ENCODE measurements at regions of chr4 and their contacts with region 1.

Region 1: GRCh38 chr4:182925298-182925738 is 8.1 kb upstream of the DCTD start:
- DNase-seq: peak; percentile 77
- ATAC-seq: peak; percentile 98
- H3K4me3 Mint-ChIP-seq: no peak overlapping the region
- H3K27ac Mint-ChIP-seq: no peak overlapping the region
- H3K4me1 Mint-ChIP-seq: no peaks in the 10 kb centered on the region
- H3K27me3 Mint-ChIP-seq: peaks cover 2% of the 10 kb centered on the region

Region 2: GRCh38 chr4:181143250-181143854 is 1782.0 kb before region 1 on chr4:
- CTCF ChIA-PET with region 1: no interaction called
- POLR2A ChIA-PET with region 1: no interaction called
- intact Hi-C with region 1: loop called in 1 of 2 experiments (anchors 10 kb)
- DNase-seq: peak; percentile 84
- ATAC-seq: peak; percentile 60
- H3K4me3 Mint-ChIP-seq: no peak overlapping the region
- H3K27ac Mint-ChIP-seq: no peak overlapping the region
- H3K4me1 Mint-ChIP-seq: no peaks in the 10 kb centered on the region
- H3K27me3 Mint-ChIP-seq: peaks cover 5% of the 10 kb centered on the region

Region 3: DNA sequence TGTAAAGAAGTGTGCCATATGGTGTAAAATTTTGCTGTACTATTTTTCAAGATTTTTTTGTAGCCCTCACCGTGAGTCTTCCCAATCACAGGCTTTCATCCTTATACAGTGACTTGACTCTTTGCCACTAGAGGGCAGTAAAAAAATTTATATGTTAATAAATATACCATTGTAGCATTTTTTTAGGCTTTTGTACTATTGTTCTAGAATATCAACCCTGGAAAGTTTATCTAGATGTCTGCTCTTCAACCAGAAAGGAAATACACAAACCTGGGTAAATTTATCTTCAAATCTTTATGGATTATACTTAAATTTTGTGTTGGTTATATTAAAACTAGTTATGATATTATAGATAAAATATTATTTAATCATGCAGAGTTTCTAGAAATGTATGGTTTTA is 446.8 kb before region 1 on chr4:
- CTCF ChIA-PET with region 1: interaction called, 4 read pairs
- POLR2A ChIA-PET with region 1: no interaction called
- intact Hi-C with region 1: loop called (anchors 2 to 10 kb)
- DNase-seq: no peak
- ATAC-seq: no peak
- H3K4me3 Mint-ChIP-seq: no peak overlapping the region
- H3K27ac Mint-ChIP-seq: no peak overlapping the region
- H3K4me1 Mint-ChIP-seq: no peaks in the 10 kb centered on the region
- H3K27me3 Mint-ChIP-seq: no peaks in the 10 kb centered on the region

Region 4: DNA sequence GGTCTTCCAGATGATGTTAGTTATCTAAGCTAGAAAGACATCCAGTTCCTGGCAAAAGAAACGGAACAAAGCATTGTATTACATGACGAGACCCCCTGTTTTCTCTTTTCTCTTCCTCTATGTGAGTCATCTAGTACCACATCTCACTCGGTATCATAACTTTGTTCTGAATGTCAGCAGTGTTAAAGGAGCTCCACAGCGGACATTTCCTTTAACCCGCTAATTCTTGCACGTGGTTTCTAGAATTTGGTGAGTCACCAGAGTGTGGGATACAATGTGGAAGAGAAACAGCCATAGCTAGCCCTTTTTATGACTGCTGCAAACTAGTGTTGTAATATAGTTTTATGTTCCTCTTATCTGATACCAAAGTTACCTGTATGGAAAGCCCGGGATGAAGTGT is 438.4 kb before region 1 on chr4:
- CTCF ChIA-PET with region 1: no interaction called
- POLR2A ChIA-PET with region 1: no interaction called
- intact Hi-C with region 1: loop called in 1 of 2 experiments (anchors 10 kb)
- DNase-seq: peak; percentile 6
- ATAC-seq: no peak
- H3K4me3 Mint-ChIP-seq: no peak overlapping the region
- H3K27ac Mint-ChIP-seq: no peak overlapping the region
- H3K4me1 Mint-ChIP-seq: no peaks in the 10 kb centered on the region
- H3K27me3 Mint-ChIP-seq: peaks cover 19% of the 10 kb centered on the region

Region 5: DNA sequence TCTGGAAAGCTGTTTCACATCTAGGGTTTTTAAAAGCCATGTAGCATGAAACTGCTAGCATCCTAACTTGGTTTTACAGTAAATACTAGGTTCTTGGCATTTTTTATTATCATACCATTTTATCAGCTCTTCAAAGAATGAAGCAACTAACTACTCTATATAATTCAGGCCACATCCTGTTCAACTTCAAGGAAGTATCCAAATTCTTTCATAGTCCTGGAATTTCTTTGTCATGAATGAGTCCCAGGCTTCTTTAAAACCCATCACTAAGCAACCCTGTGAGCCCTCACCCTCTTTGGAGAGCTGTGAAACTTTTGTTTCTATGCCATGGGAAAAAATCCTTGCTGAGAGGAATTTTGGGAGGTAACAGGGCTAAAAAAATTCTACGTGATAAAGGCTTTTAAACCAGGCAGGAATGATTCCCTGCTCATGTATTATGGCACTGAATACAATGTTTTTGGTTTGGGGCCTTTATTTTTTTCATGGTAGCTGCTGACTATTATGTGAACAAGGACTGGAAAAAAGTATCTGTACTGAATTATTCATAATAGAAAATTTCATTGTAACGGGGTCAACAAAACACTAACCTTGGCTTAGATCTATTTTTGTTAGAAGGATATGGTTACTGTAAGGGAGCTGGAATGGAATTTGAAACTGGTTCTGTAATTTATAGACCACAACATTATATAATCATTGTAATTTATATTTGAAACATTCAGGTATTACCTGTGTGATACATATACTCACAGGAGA is 173.0 kb before region 1 on chr4:
- CTCF ChIA-PET with region 1: no interaction called
- POLR2A ChIA-PET with region 1: no interaction called
- intact Hi-C with region 1: no loop called
- DNase-seq: no peak
- ATAC-seq: no peak
- H3K4me3 Mint-ChIP-seq: no peak overlapping the region
- H3K27ac Mint-ChIP-seq: no peak overlapping the region
- H3K4me1 Mint-ChIP-seq: no peaks in the 10 kb centered on the region
- H3K27me3 Mint-ChIP-seq: no peaks in the 10 kb centered on the region

Region 6: GRCh38 chr4:183098723-183099536 is 173.6 kb after region 1 on chr4 and contains the start of gene WWC2:
- CTCF ChIA-PET with region 1: no interaction called
- POLR2A ChIA-PET with region 1: no interaction called
- intact Hi-C with region 1: no loop called
- DNase-seq: peak; percentile 75
- ATAC-seq: peak; percentile 75
- H3K4me3 Mint-ChIP-seq: peak within 1 kb of the TSS; percentile 59
- H3K27ac Mint-ChIP-seq: no peak within 1 kb of the TSS
- H3K4me1 Mint-ChIP-seq: peaks cover 5% of the 10 kb centered on the region
- H3K27me3 Mint-ChIP-seq: peaks cover 33% of the 10 kb centered on the region
- total RNA-seq, gene WWC2: 3.6 to 4.3 TPM